ENCODE measurements at regions of chr20 and their contacts with region 1.

Region 1: GRCh38 chr20:38109591-38110524 is 55.2 kb downstream of the TGM2 start:
- DNase-seq: peak; percentile 87 to 99
- H3K4me3 ChIP-seq: no peak overlapping the region; the same call in 1 of the 2 replicates
- H3K27ac ChIP-seq: peak overlapping the region; percentile 92
- H3K4me1 ChIP-seq: peaks cover 58% of the 10 kb centered on the region
- H3K27me3 ChIP-seq: no peaks in the 10 kb centered on the region
- CTCF ChIP-seq: no peak

Region 2: GRCh38 chr20:38127011-38127621 is 17.3 kb after region 1 on chr20:
- CTCF ChIA-PET with region 1: interaction called, 3 read pairs
- POLR2A ChIA-PET with region 1: no interaction called
- intact Hi-C with region 1: loop called (anchors 1 kb)
- DNase-seq: peak; percentile 69 to 89
- H3K4me3 ChIP-seq: no peak overlapping the region
- H3K27ac ChIP-seq: peak overlapping the region; percentile 97
- H3K4me1 ChIP-seq: peaks cover 78% of the 10 kb centered on the region
- H3K27me3 ChIP-seq: no peaks in the 10 kb centered on the region
- CTCF ChIP-seq: no peak

Measured in PC-9 (cell line).